HAP-1 (cell line): ENCODE measurements at regions of chr12 and their contacts with region 1.

Region 1: GRCh38 chr12:7859552-7859951 is 13.2 kb downstream of the SLC2A14 start:
- DNase-seq: no peak
- H3K4me3 ChIP-seq: no peak overlapping the region
- H3K4me1 ChIP-seq: peaks cover 5% of the 10 kb centered on the region
- H3K27me3 ChIP-seq: 0 out of 2 replicates have a peak, but pooled peaks cover 3% of the 10 kb centered on the region

Region 2: DNA sequence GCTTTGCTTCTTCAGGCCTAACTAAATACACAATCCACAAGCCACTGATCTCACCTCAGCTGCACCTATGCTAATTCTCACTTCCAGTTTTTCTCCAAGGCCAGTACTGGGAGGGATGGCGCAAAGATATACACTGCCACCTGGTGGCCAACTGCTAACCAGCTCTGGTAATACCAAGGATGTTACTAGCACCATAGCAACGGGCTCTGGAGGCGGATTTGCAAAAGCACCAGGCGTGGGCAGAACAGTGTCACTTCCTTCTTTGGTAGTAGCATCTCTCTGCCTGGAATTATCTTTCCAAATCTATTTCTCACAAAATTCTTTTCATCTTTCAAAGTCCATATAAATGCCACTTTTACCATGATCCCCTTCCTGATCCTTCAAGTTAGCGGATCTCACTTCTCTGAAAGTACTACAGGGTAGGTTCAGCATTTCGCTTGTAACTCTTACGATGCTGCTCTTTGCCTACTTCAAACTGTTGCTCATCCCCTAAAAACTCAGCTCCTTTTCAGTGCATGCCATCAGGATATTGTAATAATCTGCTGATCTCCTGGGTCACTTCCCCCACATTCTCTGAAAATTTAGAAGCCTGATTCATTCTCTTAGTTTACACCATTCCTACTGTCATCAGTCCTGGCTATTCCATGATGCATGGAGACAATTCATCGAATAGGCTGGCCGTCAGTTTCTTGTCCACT is 135.9 kb after region 1 on chr12:
- in situ Hi-C with region 1: loop called (anchors 5 kb)
- DNase-seq: peak; percentile 60 to 76
- H3K4me3 ChIP-seq: no peak overlapping the region
- H3K4me1 ChIP-seq: no peaks in the 10 kb centered on the region
- H3K27me3 ChIP-seq: no peaks in the 10 kb centered on the region